HAP-1 (cell line): ENCODE measurements at regions of chr16 and their contacts with region 1.

Region 1: GRCh38 chr16:67159593-67160406 is at the starts of genes FBXL8 and TRADD:
- DNase-seq: peak; percentile 55 to 79
- H3K4me3 ChIP-seq: peak within 1 kb of the TSS; percentile 67
- H3K4me1 ChIP-seq: no peaks in the 10 kb centered on the region; the same call in 1 of the 2 replicates
- H3K27me3 ChIP-seq: no peaks in the 10 kb centered on the region

Region 2: GRCh38 chr16:67017810-67018488 is 141.9 kb before region 1 on chr16:
- in situ Hi-C with region 1: loop called (anchors 10 kb)
- DNase-seq: peak; percentile 92 to 94
- H3K4me3 ChIP-seq: no peak overlapping the region
- H3K4me1 ChIP-seq: peaks cover 4% of the 10 kb centered on the region; the same call in 1 of the 2 replicates
- H3K27me3 ChIP-seq: no peaks in the 10 kb centered on the region

Region 3: DNA sequence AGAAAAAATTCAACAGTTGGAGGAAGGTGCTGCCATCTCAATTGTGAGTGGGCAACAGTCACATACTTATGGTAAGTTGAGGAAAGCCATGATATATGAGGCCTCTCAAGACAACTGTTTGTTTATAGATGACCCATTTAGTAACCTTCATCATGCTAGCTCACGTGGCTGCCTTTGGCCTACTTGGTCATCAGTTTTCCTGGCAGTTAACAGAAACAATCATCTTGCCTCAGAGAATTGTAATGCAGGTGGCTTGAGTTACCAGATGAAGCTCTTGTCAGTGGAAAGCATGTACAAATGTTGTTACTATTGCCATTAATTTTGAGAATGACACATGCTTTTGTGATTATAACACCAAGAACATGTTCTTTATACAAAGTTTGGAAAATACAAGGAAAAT is 218.8 kb after region 1 on chr16:
- in situ Hi-C with region 1: no loop called
- DNase-seq: no peak
- H3K4me3 ChIP-seq: no peak overlapping the region
- H3K4me1 ChIP-seq: no peaks in the 10 kb centered on the region
- H3K27me3 ChIP-seq: 0 out of 2 replicates have a peak, but pooled peaks cover 5% of the 10 kb centered on the region